Left ventricle myocardium superior (tissue), 1 donor: ENCODE measurements at regions of chr19 and their contacts with region 1.

Region 1: DNA sequence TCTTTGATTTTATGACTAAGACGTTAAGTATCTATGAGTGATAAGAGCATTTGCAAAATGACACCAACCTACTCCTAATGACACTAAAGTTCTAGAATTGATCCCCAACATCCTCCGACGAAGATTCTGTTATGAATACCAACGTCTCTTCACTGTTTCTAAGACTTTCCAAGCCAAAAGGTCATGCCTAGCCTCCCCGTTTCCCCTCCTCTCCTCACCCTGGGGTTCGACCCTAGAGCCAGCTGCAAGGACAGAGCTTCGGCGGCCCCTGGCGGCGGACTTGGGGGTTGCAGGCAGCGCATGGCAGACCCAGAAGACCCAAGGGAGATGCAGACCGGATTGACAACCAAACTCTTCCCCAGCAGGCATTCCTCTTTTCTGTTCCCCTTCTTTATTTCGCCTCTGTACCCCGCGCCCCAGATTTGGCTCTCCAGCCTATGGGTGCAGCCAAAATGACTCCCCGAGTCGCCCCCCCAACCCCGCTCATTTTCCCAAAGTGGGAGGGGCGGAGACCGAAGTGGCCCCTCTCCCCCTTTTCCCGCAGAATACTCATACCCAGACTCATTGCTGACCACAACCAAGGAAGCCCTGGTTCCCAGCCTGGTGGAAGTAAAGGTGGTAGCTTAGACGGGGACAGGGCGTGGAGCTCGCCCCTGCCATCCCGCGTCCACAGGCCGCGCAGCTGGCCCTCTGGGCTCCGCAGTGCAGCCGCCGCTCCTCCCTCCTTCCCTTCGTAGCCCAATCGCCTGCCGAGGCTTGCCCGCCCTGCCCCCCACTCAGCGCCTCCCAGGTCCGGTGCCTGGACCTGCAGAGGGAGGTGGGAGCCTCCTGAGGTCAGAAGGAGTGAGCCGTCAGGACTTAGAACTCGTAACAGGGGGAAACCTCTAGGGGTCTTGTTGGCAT is 4.1 kb upstream of the EML2 start:
- DNase-seq: peak; percentile 93
- ATAC-seq: peak; percentile 57

Region 2: GRCh38 chr19:45523642-45524256 is 119.5 kb before region 1 on chr19:
- intact Hi-C with region 1: loop called (anchors 5 kb)
- DNase-seq: peak; percentile 75
- ATAC-seq: peak; percentile 94